ENCODE measurements at regions of chr2 and their contacts with region 1.

Region 1: GRCh38 chr2:44746856-44747617 is 194.5 kb upstream of the SIX3 start:
- DNase-seq: peak; percentile 93
- ATAC-seq: peak; percentile 97
- H3K4me3 ChIP-seq: peak overlapping the region; percentile 38; the same call in 1 of the 2 replicates
- H3K27ac ChIP-seq: peak overlapping the region; percentile 87
- H3K4me1 ChIP-seq: peaks cover 20% of the 10 kb centered on the region
- H3K27me3 ChIP-seq: no peaks in the 10 kb centered on the region
- CTCF ChIP-seq: no peak

Region 2: GRCh38 chr2:44731505-44731904 is 15.5 kb before region 1 on chr2:
- CTCF ChIA-PET with region 1: no interaction called
- POLR2A ChIA-PET with region 1: no interaction called
- intact Hi-C with region 1: loop called (anchors 2 kb)
- DNase-seq: no peak
- ATAC-seq: no peak
- H3K4me3 ChIP-seq: no peak overlapping the region
- H3K27ac ChIP-seq: no peak overlapping the region
- H3K4me1 ChIP-seq: peaks cover 18% of the 10 kb centered on the region
- H3K27me3 ChIP-seq: no peaks in the 10 kb centered on the region
- CTCF ChIP-seq: no peak

Region 3: GRCh38 chr2:44759823-44760222 is 12.8 kb after region 1 on chr2:
- CTCF ChIA-PET with region 1: no interaction called
- POLR2A ChIA-PET with region 1: no interaction called
- intact Hi-C with region 1: no loop called
- DNase-seq: no peak
- ATAC-seq: no peak
- H3K4me3 ChIP-seq: no peak overlapping the region
- H3K27ac ChIP-seq: no peak overlapping the region
- H3K4me1 ChIP-seq: peaks cover 11% of the 10 kb centered on the region
- H3K27me3 ChIP-seq: no peaks in the 10 kb centered on the region
- CTCF ChIP-seq: no peak